Activated CD4-positive, alpha-beta memory T cell treated with anti-CD3 and anti-CD28 coated beads, Interleukin-2, amount 10 ng/mL, durations not matched to agents 7 days and 5 days (primary cell): ENCODE measurements at regions of chr1 and their contacts with region 1.

Region 1: GRCh38 chr1:159924981-159925712 is at the start of gene TAGLN2:
- DNase-seq: peak; percentile 91
- H3K4me3 Mint-ChIP-seq: peak within 1 kb of the TSS; percentile 100
- H3K27ac Mint-ChIP-seq: peak within 1 kb of the TSS; percentile 98
- H3K4me1 Mint-ChIP-seq: peaks cover 36% of the 10 kb centered on the region
- H3K27me3 Mint-ChIP-seq: no peaks in the 10 kb centered on the region
- total RNA-seq, gene TAGLN2: 548 to 554 TPM

Region 2: DNA sequence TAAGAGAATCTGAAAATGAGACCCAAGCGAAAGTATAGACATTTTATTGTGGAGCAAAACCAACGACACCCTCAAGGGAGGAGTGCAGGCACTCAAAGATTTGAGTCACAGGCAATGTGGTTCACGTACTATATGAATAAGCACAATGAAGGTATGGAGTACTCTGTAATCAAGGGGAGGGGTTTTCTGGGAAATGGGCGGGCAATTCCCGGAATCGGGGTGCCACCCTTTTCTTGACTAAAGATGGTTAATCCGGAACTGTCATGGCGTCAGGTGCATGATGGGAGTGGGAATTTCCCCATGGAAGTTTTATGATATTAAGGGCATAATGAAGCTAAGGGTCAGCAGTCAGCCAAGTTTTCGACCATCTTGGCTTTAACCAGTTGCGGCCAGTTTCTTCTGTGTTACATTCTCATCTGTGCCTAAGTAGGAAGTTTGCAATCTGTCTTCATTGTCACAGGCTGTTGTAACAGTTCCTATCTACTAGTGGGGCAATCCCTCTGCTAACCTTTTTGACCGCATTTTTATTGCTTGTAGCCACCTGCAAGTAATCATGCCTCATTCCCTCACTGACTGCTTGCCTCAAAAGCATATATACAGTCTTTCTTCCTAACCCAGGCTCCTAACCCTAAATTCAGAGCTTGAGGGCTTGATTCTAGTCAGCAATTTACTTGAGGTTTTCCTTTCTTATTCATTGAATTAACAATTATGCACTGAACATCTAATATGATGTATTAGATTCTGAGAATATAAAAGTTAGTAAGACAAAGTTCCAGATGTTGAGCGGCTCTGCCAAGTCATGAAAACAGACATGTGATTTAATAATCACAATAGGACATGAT is 847.8 kb before region 1 on chr1:
- CTCF ChIA-PET with region 1: no interaction called
- POLR2A ChIA-PET with region 1: interaction called, 12 read pairs
- DNase-seq: peak; percentile 99
- H3K4me3 Mint-ChIP-seq: peak overlapping the region; percentile 78
- H3K27ac Mint-ChIP-seq: peak overlapping the region; percentile 99
- H3K4me1 Mint-ChIP-seq: peaks cover 43% of the 10 kb centered on the region
- H3K27me3 Mint-ChIP-seq: peaks cover 2% of the 10 kb centered on the region

Region 3: DNA sequence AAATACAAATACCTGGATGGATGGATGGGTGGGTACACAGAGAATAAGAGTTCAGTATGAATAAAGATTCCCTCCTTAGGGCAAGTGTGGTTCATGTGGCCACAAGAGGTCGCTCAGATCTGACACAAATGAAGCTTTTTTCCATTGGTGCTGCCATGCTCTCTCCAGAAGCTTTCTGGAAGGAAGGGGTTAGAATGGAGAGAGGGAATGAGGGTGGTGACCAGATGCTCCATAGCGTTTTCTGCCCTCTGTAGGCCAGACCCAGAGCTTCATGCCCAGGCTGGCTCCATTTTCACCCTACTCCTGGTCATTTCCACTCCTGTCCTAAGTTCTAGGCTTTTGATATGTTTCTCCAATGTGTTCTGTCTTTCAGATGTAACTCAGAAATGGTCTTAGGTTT is 126.3 kb before region 1 on chr1:
- CTCF ChIA-PET with region 1: no interaction called
- POLR2A ChIA-PET with region 1: interaction called, 10 read pairs
- DNase-seq: peak; percentile 52
- H3K4me3 Mint-ChIP-seq: no peak overlapping the region
- H3K27ac Mint-ChIP-seq: no peak overlapping the region
- H3K4me1 Mint-ChIP-seq: peaks cover 16% of the 10 kb centered on the region
- H3K27me3 Mint-ChIP-seq: peaks cover 41% of the 10 kb centered on the region

Region 4: DNA sequence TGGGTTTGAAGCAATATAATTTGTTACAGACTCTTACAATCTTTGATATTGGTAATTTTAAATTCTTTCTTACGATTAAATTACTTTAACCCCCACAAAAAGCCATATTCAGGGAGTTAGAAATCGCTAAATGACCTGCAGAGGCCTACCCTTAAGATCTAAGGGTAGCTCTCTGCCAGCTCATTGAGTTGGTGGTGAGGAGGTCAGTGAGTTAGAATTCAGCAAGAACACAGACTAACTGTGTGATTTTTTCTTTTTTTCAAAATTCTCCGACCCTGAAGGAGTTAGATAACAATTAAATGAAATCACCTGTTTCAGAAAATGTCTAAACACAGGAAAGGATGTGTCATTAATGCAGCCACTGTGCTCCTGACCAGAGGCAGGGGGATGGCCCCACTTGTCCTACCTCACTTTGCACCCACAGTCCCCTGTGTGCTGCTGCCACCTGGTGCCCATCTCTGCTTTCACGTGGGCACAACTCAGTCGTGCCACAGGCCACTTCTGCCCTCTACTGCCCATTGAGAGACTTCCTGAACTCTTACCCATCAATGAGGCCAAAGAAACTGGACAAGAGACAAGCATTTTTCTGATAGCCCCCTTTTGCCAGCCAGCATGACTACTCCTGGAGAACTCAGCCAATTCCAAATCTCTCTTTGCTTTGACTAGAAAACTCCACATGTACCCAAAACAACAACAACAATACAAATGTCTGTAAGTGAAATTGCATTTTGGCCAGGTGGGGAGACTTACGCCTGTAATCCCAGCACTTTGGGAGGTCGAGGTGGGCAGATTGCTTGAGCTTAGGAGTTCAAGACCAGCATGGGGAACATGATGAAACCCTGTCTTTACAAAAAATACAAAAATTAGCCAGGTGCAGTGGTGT is 33.6 kb before region 1 on chr1:
- CTCF ChIA-PET with region 1: interaction called, 13 read pairs
- POLR2A ChIA-PET with region 1: interaction called, 64 read pairs
- DNase-seq: peak; percentile 82
- H3K4me3 Mint-ChIP-seq: no peak overlapping the region
- H3K27ac Mint-ChIP-seq: no peak overlapping the region
- H3K4me1 Mint-ChIP-seq: peaks cover 19% of the 10 kb centered on the region
- H3K27me3 Mint-ChIP-seq: peaks cover 12% of the 10 kb centered on the region

Region 5: GRCh38 chr1:159936273-159936904 is 11.2 kb after region 1 on chr1:
- CTCF ChIA-PET with region 1: interaction called, 11 read pairs
- POLR2A ChIA-PET with region 1: interaction called, 56 read pairs
- DNase-seq: peak; percentile 86
- H3K4me3 Mint-ChIP-seq: no peak overlapping the region
- H3K27ac Mint-ChIP-seq: no peak overlapping the region
- H3K4me1 Mint-ChIP-seq: peaks cover 28% of the 10 kb centered on the region
- H3K27me3 Mint-ChIP-seq: peaks cover 23% of the 10 kb centered on the region

Region 6: DNA sequence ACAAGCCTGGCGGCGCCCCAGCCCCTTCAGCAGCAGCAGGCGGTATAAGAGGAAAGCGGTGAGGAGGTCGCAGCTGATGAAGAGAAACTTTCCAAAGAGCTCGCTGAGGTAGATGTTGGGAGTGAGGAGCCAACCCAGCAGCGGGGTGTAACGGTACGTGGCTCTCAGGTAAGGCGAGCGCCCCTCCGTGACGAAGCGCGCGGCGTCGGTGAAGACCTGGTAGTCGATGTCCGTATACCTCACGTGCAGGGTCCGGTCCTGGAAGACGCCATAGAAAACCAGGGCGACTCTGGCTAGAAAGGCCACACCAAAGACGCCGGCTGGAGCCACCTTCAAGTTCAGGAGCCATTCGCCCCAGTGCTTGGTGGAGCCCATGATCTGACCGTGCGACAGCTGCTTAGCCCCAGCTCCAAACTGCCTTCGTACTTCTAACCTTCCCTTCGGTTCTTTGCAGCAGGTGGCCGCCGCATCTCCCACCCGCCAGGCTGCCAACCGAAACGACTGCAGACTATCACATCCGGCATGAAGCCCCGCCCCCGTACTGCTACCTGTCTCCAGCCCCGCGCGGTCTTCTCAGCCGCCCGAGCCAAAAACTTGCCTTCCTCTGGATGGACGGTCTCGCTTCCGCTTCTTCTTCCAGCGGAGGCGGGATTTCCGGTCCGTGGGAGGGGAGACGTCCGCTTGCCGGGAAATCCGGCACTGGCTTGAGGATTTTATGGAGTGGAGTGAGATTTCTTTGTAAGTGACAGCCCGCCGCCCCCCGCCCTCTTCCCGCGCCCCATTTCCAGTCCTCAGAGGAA is 106.4 kb after region 1 on chr1 and contains the start of gene PIGM:
- CTCF ChIA-PET with region 1: interaction called, 4 read pairs
- POLR2A ChIA-PET with region 1: interaction called, 13 read pairs
- DNase-seq: peak; percentile 95
- H3K4me3 Mint-ChIP-seq: peak within 1 kb of the TSS; percentile 90
- H3K27ac Mint-ChIP-seq: peak within 1 kb of the TSS; percentile 80
- H3K4me1 Mint-ChIP-seq: peaks cover 32% of the 10 kb centered on the region
- H3K27me3 Mint-ChIP-seq: peaks cover 2% of the 10 kb centered on the region
- total RNA-seq, gene PIGM: 5.2 to 5.7 TPM

Region 7: GRCh38 chr1:160261893-160262794 is 337.0 kb after region 1 on chr1 and contains the start of gene DCAF8:
- CTCF ChIA-PET with region 1: interaction called, 3 read pairs
- POLR2A ChIA-PET with region 1: interaction called, 14 read pairs
- DNase-seq: peak; percentile 98
- H3K4me3 Mint-ChIP-seq: peak within 1 kb of the TSS; percentile 92
- H3K27ac Mint-ChIP-seq: peak within 1 kb of the TSS; percentile 99
- H3K4me1 Mint-ChIP-seq: peaks cover 51% of the 10 kb centered on the region
- H3K27me3 Mint-ChIP-seq: no peaks in the 10 kb centered on the region
- total RNA-seq, gene DCAF8: 123 to 125 TPM